CD4-positive, alpha-beta T cell (primary cell): ENCODE measurements at regions of chr19 and their contacts with region 1.

Region 1: DNA sequence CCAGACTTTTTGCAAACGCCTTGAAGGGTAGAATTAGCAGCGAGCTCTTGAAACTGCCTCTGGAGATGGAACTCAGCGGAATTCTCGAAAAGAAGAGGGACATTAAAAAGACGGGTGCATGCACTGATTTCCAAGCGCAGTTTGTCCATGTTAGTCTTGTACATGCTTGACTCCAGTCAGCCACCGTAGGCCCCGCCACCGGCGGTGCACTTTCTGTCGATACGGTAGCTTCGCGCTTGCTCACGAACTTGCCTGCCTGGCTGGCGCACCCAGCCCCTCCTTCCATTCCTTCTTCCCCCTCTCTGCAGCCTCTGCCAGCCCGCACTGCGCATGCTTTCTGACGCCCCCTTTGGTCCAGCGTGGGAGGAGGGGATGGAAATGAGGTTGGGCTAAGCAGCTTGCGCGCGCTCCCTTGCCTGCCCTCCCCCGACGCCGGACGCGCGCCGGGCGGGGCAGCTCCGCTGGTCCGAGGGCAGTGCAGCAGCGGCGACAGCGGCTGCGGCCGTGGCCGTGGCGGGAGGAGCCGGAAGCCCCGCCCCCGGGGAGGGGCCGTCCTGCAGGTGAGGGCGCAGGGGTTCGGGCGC is at the start of gene ZNF575:
- DNase-seq: peak; percentile 70 to 93 (median 81)
- ATAC-seq: peak; percentile 48
- H3K4me3 ChIP-seq: peak within 1 kb of the TSS; percentile 77
- H3K4me3 Mint-ChIP-seq: peak within 1 kb of the TSS; percentile 96
- H3K27ac ChIP-seq: peak within 1 kb of the TSS; percentile 53 to 61
- H3K27ac Mint-ChIP-seq: peak within 1 kb of the TSS; percentile 92
- H3K4me1 ChIP-seq: peaks cover 21% of the 10 kb centered on the region
- H3K4me1 Mint-ChIP-seq: peaks cover 21% of the 10 kb centered on the region
- H3K27me3 ChIP-seq: no peaks in the 10 kb centered on the region
- H3K27me3 Mint-ChIP-seq: no peaks in the 10 kb centered on the region
- CTCF ChIP-seq: peak; percentile 13
- total RNA-seq, gene ZNF575: 2.6 to 2.7 TPM

Region 2: GRCh38 chr19:43438291-43439096 is 94.6 kb before region 1 on chr19:
- CTCF ChIA-PET with region 1: no interaction called
- POLR2A ChIA-PET with region 1: interaction called, 25 read pairs
- intact Hi-C with region 1: no loop called
- DNase-seq: peak in 7 of 14 experiments; percentile 10 to 34 (median 26)
- ATAC-seq: peak; percentile 37
- H3K4me3 ChIP-seq: no peak overlapping the region
- H3K4me3 Mint-ChIP-seq: peak overlapping the region; percentile 76
- H3K27ac ChIP-seq: peak overlapping the region; percentile 74 to 90
- H3K27ac Mint-ChIP-seq: peak overlapping the region; percentile 96
- H3K4me1 ChIP-seq: peaks cover 41% of the 10 kb centered on the region
- H3K4me1 Mint-ChIP-seq: peaks cover 64% of the 10 kb centered on the region
- H3K27me3 ChIP-seq: no peaks in the 10 kb centered on the region
- H3K27me3 Mint-ChIP-seq: no peaks in the 10 kb centered on the region
- CTCF ChIP-seq: no peak

Region 3: DNA sequence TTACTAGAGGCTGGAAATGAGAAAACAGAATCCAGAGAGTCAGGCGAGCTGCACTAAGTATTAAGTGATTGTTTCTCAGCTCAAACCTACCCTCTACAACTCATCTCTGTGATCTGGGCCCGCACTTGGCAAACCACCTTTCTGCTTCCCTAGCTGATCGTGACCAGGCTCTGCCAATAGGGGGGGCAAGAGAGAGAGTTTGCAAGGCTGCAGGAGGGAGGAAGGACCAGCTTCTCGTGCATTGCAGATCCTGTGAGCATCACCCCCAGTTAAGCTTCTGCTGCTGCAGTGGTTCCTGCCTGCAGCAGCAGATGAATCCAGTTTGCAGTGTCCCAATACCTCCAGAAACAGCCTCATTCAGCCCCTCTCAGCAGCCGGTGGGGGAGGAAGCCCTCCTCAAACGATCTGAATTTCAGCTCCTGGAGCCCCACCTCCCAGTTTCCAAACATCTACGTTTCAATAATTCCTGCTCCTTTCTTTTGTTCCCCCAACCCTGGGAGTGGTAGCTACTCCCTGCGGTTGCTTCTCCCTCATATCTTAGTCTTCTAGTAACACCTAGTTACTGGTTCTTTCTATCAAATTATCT is 22.2 kb after region 1 on chr19:
- CTCF ChIA-PET with region 1: interaction called, 8 read pairs
- POLR2A ChIA-PET with region 1: interaction called, 12 read pairs
- intact Hi-C with region 1: loop called in 1 of 2 experiments (anchors 5 kb)
- DNase-seq: peak; percentile 76 to 91 (median 82)
- ATAC-seq: peak; percentile 100
- H3K4me3 ChIP-seq: no peak overlapping the region
- H3K4me3 Mint-ChIP-seq: peak overlapping the region; percentile 8
- H3K27ac ChIP-seq: no peak overlapping the region
- H3K27ac Mint-ChIP-seq: peak overlapping the region; percentile 15
- H3K4me1 ChIP-seq: peaks cover 7% of the 10 kb centered on the region
- H3K4me1 Mint-ChIP-seq: peaks cover 13% of the 10 kb centered on the region
- H3K27me3 ChIP-seq: no peaks in the 10 kb centered on the region
- H3K27me3 Mint-ChIP-seq: no peaks in the 10 kb centered on the region
- CTCF ChIP-seq: peak; percentile 82

Region 4: GRCh38 chr19:43575156-43575950 is 42.3 kb after region 1 on chr19 and contains the starts of genes PINLYP and XRCC1:
- CTCF ChIA-PET with region 1: no interaction called
- POLR2A ChIA-PET with region 1: interaction called, 4 read pairs
- intact Hi-C with region 1: loop called in 1 of 2 experiments (anchors 1 kb)
- DNase-seq: peak; percentile 93 to 100 (median 96)
- ATAC-seq: peak; percentile 98
- H3K4me3 ChIP-seq: peak within 1 kb of the TSS; percentile 90
- H3K4me3 Mint-ChIP-seq: peak within 1 kb of the TSS; percentile 98
- H3K27ac ChIP-seq: peak within 1 kb of the TSS; percentile 81 to 94
- H3K27ac Mint-ChIP-seq: peak within 1 kb of the TSS; percentile 96
- H3K4me1 ChIP-seq: peaks cover 33% of the 10 kb centered on the region
- H3K4me1 Mint-ChIP-seq: peaks cover 58% of the 10 kb centered on the region
- H3K27me3 ChIP-seq: no peaks in the 10 kb centered on the region
- H3K27me3 Mint-ChIP-seq: no peaks in the 10 kb centered on the region
- CTCF ChIP-seq: no peak
- total RNA-seq, gene PINLYP: not detected
- total RNA-seq, gene XRCC1: 25.1 to 26.2 TPM

Region 5: DNA sequence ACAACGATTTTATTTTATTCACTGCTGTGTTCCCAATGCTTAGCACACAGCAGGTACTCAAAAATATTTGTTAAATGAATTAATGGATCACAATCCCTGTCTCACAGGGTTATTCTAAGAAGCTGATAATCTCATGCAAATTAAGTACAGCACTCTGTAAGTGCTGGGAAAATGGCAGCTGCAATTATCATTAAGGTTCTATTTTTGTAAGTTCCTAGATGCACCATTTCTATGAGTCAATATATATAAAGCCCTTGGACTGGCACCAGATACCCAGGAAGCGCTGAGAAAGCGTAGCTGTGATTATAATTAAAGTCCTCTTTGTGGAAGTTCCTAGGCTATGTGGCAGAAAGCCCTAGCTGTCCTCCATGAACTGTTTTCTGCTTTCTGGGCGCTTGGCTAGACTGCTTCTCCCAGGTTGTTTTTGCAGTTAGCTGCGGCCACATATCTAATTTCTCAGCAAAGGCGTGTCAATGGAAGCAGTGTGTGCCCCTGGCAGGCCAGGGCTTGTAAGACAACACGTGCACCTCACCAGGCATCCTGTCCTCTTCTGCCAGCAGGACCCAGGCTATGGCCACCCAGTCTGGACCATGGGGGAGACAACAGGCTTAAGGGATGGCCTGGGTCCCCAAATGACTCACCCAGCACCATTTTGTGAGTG is 73.6 kb after region 1 on chr19:
- CTCF ChIA-PET with region 1: no interaction called
- POLR2A ChIA-PET with region 1: no interaction called
- intact Hi-C with region 1: no loop called
- DNase-seq: no peak
- ATAC-seq: no peak
- H3K4me3 ChIP-seq: no peak overlapping the region
- H3K4me3 Mint-ChIP-seq: no peak overlapping the region
- H3K27ac ChIP-seq: no peak overlapping the region
- H3K27ac Mint-ChIP-seq: peak overlapping the region; percentile 47
- H3K4me1 ChIP-seq: no peaks in the 10 kb centered on the region
- H3K4me1 Mint-ChIP-seq: peaks cover 6% of the 10 kb centered on the region
- H3K27me3 ChIP-seq: no peaks in the 10 kb centered on the region
- H3K27me3 Mint-ChIP-seq: no peaks in the 10 kb centered on the region
- CTCF ChIP-seq: no peak

Region 6: GRCh38 chr19:43754503-43755255 is 221.6 kb after region 1 on chr19 and contains the start of gene SMG9:
- CTCF ChIA-PET with region 1: no interaction called
- POLR2A ChIA-PET with region 1: interaction called, 4 read pairs
- intact Hi-C with region 1: loop called in 1 of 2 experiments (anchors 10 kb)
- DNase-seq: peak; percentile 96 to 100 (median 98)
- ATAC-seq: peak; percentile 79
- H3K4me3 ChIP-seq: peak within 1 kb of the TSS; percentile 95
- H3K4me3 Mint-ChIP-seq: peak within 1 kb of the TSS; percentile 98
- H3K27ac ChIP-seq: peak within 1 kb of the TSS; percentile 97 to 99
- H3K27ac Mint-ChIP-seq: peak within 1 kb of the TSS; percentile 95
- H3K4me1 ChIP-seq: peaks cover 42% of the 10 kb centered on the region
- H3K4me1 Mint-ChIP-seq: peaks cover 43% of the 10 kb centered on the region
- H3K27me3 ChIP-seq: no peaks in the 10 kb centered on the region
- H3K27me3 Mint-ChIP-seq: no peaks in the 10 kb centered on the region
- CTCF ChIP-seq: no peak
- total RNA-seq, gene SMG9: 34.7 to 38.2 TPM

Region 7: GRCh38 chr19:44131955-44132354 is 598.9 kb after region 1 on chr19:
- CTCF ChIA-PET with region 1: no interaction called
- POLR2A ChIA-PET with region 1: no interaction called
- intact Hi-C with region 1: no loop called
- DNase-seq: no peak
- ATAC-seq: no peak
- H3K4me3 ChIP-seq: no peak overlapping the region
- H3K4me3 Mint-ChIP-seq: no peak overlapping the region
- H3K27ac ChIP-seq: no peak overlapping the region
- H3K27ac Mint-ChIP-seq: no peak overlapping the region
- H3K4me1 ChIP-seq: no peaks in the 10 kb centered on the region
- H3K4me1 Mint-ChIP-seq: no peaks in the 10 kb centered on the region
- H3K27me3 ChIP-seq: no peaks in the 10 kb centered on the region
- H3K27me3 Mint-ChIP-seq: no peaks in the 10 kb centered on the region
- CTCF ChIP-seq: no peak